BJ (cell line): ENCODE measurements at regions of chr3 and their contacts with region 1.

Region 1: GRCh38 chr3:138594150-138594934 is at the start of gene CEP70:
- DNase-seq: peak; percentile 53
- H3K4me3 ChIP-seq: peak within 1 kb of the TSS; percentile 62
- H3K27me3 ChIP-seq: no peaks in the 10 kb centered on the region
- CTCF ChIP-seq: peak; percentile 65
- polyA plus RNA-seq, gene CEP70: 3.6 and 8.8 TPM in 2 replicates

Region 2: GRCh38 chr3:138432576-138433240 is 161.6 kb before region 1 on chr3:
- CTCF ChIA-PET with region 1: no interaction called
- POLR2A ChIA-PET with region 1: no interaction called
- DNase-seq: no peak
- H3K4me3 ChIP-seq: no peak overlapping the region
- H3K27me3 ChIP-seq: peaks cover 23% of the 10 kb centered on the region
- CTCF ChIP-seq: no peak

Region 3: DNA sequence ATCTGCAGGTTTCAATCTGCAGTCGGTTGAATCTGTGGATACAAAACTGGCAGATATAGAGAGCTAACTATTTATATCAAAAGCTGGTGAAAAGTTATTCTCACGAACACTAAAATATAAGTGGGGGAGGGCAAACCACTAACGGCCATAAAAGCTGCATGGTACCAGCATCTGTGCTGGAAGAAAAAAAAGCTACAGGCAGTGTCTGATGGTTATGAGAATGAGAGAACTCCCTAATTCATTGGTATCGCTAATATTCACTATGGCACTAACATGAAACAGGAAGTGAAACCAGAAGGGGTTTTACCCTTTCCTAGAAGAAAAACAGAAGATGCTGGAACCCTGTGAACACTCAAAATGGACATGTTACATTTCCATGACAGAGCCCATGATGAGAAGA is 16.2 kb before region 1 on chr3:
- CTCF ChIA-PET with region 1: interaction called, 18 read pairs
- POLR2A ChIA-PET with region 1: no interaction called
- DNase-seq: no peak
- H3K4me3 ChIP-seq: no peak overlapping the region
- H3K27me3 ChIP-seq: no peaks in the 10 kb centered on the region
- CTCF ChIP-seq: no peak

Region 4: GRCh38 chr3:138694287-138695007 is 100.1 kb after region 1 on chr3:
- CTCF ChIA-PET with region 1: interaction called, 21 read pairs
- POLR2A ChIA-PET with region 1: interaction called, 3 read pairs
- DNase-seq: peak; percentile 99
- H3K4me3 ChIP-seq: no peak overlapping the region
- H3K27me3 ChIP-seq: no peaks in the 10 kb centered on the region
- CTCF ChIP-seq: no peak

Region 5: GRCh38 chr3:138890555-138891187 is 296.3 kb after region 1 on chr3:
- CTCF ChIA-PET with region 1: no interaction called
- POLR2A ChIA-PET with region 1: no interaction called
- DNase-seq: no peak
- H3K4me3 ChIP-seq: no peak overlapping the region
- H3K27me3 ChIP-seq: no peaks in the 10 kb centered on the region
- CTCF ChIP-seq: no peak